GM10248 (cell line): ENCODE measurements at regions of chr1 and their contacts with region 1.

Region 1: DNA sequence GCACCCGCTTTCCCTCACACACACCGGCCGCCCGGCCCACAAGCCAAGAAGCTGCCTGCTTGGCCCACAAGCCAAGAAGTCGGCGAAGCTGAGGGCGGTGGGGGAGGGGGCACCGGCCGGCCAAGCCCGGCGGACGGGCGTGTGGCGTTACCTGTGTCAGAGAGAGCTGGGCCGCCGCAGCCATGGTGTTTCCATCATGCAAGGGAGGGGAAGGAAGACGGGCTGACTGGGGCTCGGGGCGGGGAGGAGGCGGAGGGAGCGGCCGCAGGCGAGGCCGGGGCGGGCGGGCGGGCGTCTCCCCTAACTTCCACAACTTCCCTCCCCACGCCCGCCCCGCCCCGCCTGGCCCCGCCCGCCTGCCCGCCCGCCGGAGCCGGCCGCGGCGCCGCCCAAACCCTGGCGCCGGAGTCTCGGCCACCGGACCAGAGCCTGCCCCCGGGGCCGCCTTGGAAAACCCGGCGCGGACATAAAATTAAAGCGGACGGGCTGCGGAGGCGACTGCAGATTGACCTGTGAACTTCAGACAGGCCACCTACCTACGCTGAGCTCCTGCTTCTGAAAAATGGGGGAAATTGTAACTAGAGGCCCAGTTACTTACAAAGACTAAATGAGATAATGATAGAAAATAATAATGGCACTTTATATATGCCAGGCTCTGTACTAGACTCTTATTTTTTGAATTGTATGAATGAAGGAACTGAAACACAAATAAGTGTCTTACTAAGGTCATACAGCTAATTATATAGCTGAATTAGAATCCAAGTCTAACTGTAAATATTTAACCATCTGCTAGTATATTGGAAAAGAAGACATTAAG is at the start of gene EPS15:
- DNase-seq: peak; percentile 93
- CTCF ChIP-seq: no peak

Region 2: GRCh38 chr1:51506537-51506936 is 12.7 kb before region 1 on chr1:
- CTCF ChIA-PET with region 1: interaction called, 19 read pairs
- POLR2A ChIA-PET with region 1: interaction called, 3 read pairs
- DNase-seq: peak; percentile 21
- CTCF ChIP-seq: no peak

Region 3: DNA sequence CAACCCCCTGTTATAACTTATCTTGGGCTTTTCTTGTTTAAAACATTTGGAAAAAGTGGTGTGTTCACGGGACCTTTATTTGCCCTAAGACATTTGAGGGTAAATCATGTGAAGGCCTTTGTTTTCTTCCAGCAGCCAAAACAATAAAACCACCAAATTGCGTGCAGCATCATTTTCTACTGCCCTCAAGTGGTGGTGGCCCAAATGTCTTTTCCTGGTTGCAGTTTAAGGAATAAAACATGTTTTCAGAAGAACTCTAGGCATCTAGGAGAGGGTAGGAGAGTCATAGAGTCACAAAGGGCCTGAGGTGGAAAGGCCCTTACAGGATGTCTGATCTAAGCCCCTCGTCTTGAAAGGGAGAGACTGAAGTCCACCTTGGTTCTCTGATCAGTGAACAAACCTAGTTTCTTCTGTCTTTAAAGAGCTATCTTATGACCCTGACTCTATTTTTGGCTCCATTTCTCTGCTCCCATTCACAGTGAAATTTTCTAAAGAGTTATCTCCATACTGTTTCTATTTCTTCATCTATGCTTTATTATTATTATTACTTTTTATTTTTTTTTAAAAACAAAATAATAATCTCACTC is 15.8 kb after region 1 on chr1:
- CTCF ChIA-PET with region 1: interaction called, 22 read pairs
- POLR2A ChIA-PET with region 1: no interaction called
- DNase-seq: no peak
- CTCF ChIP-seq: peak; percentile 92

Region 4: DNA sequence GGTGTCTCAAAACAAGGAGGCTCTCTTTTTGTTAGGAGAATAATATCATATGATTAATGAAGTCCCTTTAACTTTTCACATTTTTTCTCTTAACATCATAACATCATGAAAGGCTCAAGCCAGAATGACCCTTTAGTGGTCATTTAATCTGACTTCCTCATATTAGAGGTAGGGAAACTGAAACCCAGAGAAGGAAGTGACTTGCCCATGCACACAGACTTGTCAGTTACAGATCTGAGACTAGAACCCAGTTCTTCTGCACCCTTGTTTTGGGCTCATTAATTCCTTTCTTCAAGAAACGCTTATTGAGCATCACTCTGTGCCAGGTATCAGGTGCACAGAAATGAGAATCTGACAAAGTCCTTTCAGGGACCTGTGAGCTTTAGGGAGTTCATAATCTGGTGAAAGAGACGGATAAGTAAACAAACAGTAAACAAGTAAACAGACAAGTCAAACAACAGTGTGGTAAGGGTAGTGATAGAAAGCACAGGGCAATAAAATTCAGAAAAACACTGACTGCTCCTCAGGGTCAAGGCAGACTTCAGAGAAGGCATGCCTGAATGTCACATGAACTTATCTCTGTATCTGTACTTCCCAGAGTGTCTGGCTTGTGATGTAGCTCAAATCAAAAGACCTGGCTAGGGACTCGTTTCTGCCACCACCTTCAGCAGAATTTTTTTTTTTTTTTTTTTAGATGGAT is 59.3 kb after region 1 on chr1:
- CTCF ChIA-PET with region 1: no interaction called
- POLR2A ChIA-PET with region 1: no interaction called
- DNase-seq: peak; percentile 63
- CTCF ChIP-seq: no peak